Activated CD4-positive, alpha-beta T cell treated with anti-CD3 and anti-CD28 coated beads for 36 hours (primary cell): ENCODE measurements at regions of chr2 and their contacts with region 1.

Region 1: GRCh38 chr2:24228470-24228869 is 53.6 kb downstream of the FAM228A start:
- DNase-seq: no peak
- ATAC-seq: no peak
- H3K4me3 Mint-ChIP-seq: no peak overlapping the region
- H3K27ac Mint-ChIP-seq: no peak overlapping the region
- H3K4me1 Mint-ChIP-seq: no peaks in the 10 kb centered on the region
- H3K27me3 Mint-ChIP-seq: no peaks in the 10 kb centered on the region

Region 2: GRCh38 chr2:23532391-23533337 is 695.8 kb before region 1 on chr2:
- CTCF ChIA-PET with region 1: no interaction called
- POLR2A ChIA-PET with region 1: no interaction called
- intact Hi-C with region 1: no loop called
- DNase-seq: peak; percentile 69
- ATAC-seq: peak; percentile 84
- H3K4me3 Mint-ChIP-seq: peak overlapping the region; percentile 79
- H3K27ac Mint-ChIP-seq: peak overlapping the region; percentile 97
- H3K4me1 Mint-ChIP-seq: peaks cover 32% of the 10 kb centered on the region
- H3K27me3 Mint-ChIP-seq: no peaks in the 10 kb centered on the region

Region 3: GRCh38 chr2:24382363-24383073 is 154.0 kb after region 1 on chr2:
- CTCF ChIA-PET with region 1: no interaction called
- POLR2A ChIA-PET with region 1: no interaction called
- intact Hi-C with region 1: loop called (anchors 2 to 5 kb)
- DNase-seq: peak; percentile 74
- ATAC-seq: peak; percentile 97
- H3K4me3 Mint-ChIP-seq: no peak overlapping the region
- H3K27ac Mint-ChIP-seq: no peak overlapping the region
- H3K4me1 Mint-ChIP-seq: no peaks in the 10 kb centered on the region
- H3K27me3 Mint-ChIP-seq: no peaks in the 10 kb centered on the region